Adrenal gland (tissue), 19 donors: ENCODE measurements at regions of chr19 and their contacts with region 1.

Region 1: DNA sequence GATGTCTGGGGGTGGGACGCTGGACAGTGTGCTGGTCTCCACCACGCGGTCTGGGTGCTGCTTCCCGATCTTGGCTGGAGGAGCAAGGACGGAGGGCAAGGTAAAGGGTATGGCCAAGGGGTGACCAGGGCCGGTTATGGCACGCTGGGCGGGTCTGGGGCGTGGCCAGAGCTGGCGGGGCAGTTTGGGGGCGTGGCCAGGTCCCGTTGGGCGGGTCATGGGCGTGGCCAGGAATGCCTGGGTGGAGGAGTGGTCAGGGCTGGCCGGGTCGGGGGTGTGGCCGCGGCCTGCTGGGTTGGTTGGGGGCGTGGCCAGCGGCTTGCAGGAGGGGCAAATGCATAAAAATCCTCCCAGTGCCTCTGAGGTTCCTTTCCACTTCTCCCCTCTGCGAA is 19.2 kb downstream of the GPX4 start:
- DNase-seq: peak; percentile 69 to 88 (median 79)
- H3K4me3 ChIP-seq: no peak overlapping the region
- H3K27ac ChIP-seq: peak overlapping the region in 2 of 5 donors; percentile 17 to 58
- H3K4me1 ChIP-seq: peaks cover 0 to 19% of the 10 kb centered on the region in 2 donors
- H3K27me3 ChIP-seq: no peaks in the 10 kb centered on the region
- CTCF ChIP-seq: no peak
- POLR2A ChIP-seq: no peak

Region 2: DNA sequence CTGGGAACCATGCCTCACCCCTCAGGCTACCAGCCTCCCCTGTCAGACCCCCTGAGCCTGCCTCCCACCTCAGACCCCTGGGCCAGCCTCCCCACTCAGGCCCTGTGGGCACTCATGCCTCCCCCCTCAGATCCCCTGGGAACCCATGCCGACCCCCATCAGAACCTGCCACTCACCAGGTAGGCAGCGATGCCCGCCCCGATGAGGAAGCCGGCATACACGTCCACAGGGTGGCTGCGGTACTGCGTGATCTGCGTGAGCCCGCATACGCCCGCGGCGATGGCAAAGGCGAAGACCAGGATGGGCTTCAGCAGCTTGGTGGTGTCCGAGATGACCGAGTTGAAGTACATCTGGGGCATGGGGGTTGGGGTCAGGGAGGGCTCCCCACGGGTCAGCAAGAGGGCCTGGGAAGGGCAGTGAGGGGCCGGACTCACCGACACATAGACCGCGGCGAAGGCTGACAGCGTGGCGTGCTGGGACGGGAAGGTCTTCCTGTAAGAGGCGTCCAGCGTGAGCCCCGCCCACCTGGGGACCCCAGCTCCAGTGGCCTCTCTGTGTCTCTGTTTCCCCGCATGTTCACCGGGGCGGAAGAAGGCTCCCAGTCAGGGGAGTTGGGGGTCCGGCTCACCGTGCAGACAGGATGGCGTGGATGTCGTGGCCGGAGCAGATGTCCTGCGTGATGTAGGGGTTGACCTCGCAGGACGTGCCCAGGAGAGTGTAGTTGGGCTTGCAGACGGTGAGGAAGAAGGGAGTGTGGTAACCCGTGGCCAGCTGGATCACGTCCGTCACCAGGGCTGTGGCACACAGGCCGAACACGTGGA is 308.5 kb before region 1 on chr19:
- intact Hi-C with region 1: no loop called
- DNase-seq: peak in 1 of 7 donors; percentile 35
- H3K4me3 ChIP-seq: no peak overlapping the region
- H3K27ac ChIP-seq: no peak overlapping the region
- H3K4me1 ChIP-seq: no peaks in the 10 kb centered on the region
- H3K27me3 ChIP-seq: no peaks in the 10 kb centered on the region
- CTCF ChIP-seq: no peak
- POLR2A ChIP-seq: no peak

Region 3: DNA sequence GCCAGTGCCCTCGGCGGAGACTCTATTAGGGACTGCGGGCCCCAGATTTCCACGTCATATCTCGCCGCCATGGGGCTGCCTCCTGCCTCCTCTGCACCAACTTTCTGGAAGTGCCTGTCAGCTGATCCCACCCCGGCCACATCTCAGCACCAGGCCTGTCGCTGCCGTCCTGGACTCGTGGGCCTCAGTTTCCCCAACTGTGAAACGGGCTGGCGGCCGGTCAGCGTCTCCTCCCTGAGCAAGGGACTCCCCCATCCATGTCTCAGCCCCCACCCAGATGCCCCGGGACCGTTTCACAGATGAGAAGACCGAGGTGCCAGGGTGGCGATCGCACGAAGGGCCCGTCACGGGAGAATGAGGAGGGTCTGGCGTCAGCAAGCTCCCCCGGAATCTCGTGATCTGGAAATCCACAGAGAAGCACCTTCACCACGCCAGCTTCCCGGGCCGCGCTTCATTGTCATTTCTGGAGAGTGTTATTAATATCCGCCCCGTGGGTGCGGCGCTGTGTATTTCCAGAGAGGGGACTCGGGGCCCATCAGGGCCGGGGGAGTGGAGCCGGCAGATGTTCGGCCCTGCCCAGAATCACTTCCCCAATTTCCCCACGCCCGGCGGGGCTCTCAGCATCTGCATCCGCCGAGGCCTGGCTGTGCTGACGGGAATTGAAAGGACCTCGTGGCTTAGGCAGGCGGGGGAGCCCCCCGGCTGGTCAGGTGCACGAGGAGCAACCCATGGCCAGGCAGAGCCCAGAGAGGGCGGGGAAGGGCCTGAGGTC is 175.5 kb before region 1 on chr19:
- intact Hi-C with region 1: no loop called
- DNase-seq: peak in 5 of 7 donors; percentile 52 to 76 (median 67)
- H3K4me3 ChIP-seq: no peak overlapping the region
- H3K27ac ChIP-seq: peak overlapping the region in 1 of 5 donors; percentile 12
- H3K4me1 ChIP-seq: peaks cover 0 to 7% of the 10 kb centered on the region in 2 donors
- H3K27me3 ChIP-seq: no peaks in the 10 kb centered on the region
- CTCF ChIP-seq: no peak
- POLR2A ChIP-seq: no peak

Region 4: DNA sequence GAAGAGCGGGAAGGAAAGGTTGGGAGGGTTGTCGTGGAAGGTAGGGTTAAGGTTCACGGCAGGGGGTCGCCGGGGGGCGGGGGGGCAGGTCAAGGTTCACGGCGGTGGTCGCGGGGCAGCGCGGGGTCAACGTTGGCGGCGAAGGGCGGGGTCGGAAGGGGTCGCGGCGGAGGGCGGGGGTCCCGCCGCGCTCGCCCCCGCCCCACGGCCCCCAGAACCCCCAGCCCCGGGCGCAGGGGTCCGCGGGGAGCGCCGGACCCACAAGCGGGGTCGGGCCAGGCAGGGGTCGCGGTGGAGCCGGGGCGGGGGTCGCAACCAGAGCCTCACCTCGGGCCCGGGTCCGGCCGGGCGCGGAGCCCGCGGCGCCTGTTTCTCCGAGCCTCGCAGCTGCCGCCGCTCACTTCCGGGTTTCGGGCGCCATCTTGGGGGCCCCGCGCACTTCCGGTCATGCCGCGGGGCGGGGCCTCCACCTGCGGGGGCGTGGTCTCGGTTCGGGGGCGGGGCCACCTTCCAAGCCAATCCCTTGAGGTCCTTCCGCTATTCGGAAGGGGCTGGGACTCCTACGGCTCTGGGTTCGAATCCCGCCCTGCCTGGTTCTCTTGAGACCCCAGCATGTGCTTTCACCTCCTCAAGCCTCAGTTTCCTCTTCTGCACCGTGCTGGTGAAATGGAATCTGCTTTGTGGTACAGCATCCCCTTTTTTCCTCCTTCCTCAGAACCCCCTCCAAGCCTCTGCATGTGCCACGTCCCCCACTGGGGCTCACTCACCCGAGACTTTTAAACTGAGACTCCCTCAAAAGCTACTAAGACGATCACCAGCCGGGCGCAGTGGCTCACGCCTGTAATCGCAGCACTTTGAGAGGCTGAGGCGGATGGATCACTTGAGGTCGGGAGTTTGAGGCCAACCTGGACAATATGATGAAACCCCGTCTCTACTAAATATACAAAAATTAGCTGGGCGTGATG is 51.2 kb after region 1 on chr19 and contains the start of gene SBNO2:
- intact Hi-C with region 1: loop called in 1 of 2 experiments (anchors 5 kb)
- DNase-seq: peak; percentile 88 to 96 (median 93)
- H3K4me3 ChIP-seq: peak within 1 kb of the TSS; percentile 54 to 99 (median 74)
- H3K27ac ChIP-seq: peak within 1 kb of the TSS; percentile 97 to 100 (median 99)
- H3K4me1 ChIP-seq: peaks cover 29 to 34% of the 10 kb centered on the region in 2 donors
- H3K27me3 ChIP-seq: no peaks in the 10 kb centered on the region
- CTCF ChIP-seq: no peak
- POLR2A ChIP-seq: peak; percentile 74 to 92
- total RNA-seq, gene SBNO2: 14.4 to 176 (median 65.2) TPM

Region 5: DNA sequence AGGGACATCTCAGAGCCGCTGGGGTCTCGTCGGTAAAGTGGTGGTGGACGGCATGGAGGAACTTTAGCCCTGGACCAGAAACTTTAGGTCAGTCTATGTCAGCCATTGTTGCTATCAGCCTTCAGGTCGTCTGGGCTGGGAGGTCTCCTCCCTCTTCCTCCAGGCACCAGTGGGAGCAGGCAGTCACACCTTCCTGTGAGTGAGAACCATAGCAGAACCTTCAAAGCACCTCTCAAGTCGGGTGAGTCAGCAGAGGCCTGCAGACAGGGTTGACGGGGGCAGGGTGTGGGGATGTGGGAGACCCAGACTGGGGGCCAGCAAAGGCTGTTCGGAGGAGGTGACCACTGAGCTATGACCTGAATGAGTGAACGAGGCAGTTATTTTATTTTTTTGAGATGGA is 66.5 kb after region 1 on chr19:
- intact Hi-C with region 1: loop called in 1 of 2 experiments (anchors 5 kb)
- DNase-seq: no peak
- H3K4me3 ChIP-seq: no peak overlapping the region
- H3K27ac ChIP-seq: no peak overlapping the region
- H3K4me1 ChIP-seq: no peaks in the 10 kb centered on the region
- H3K27me3 ChIP-seq: no peaks in the 10 kb centered on the region
- CTCF ChIP-seq: no peak
- POLR2A ChIP-seq: no peak

Region 6: DNA sequence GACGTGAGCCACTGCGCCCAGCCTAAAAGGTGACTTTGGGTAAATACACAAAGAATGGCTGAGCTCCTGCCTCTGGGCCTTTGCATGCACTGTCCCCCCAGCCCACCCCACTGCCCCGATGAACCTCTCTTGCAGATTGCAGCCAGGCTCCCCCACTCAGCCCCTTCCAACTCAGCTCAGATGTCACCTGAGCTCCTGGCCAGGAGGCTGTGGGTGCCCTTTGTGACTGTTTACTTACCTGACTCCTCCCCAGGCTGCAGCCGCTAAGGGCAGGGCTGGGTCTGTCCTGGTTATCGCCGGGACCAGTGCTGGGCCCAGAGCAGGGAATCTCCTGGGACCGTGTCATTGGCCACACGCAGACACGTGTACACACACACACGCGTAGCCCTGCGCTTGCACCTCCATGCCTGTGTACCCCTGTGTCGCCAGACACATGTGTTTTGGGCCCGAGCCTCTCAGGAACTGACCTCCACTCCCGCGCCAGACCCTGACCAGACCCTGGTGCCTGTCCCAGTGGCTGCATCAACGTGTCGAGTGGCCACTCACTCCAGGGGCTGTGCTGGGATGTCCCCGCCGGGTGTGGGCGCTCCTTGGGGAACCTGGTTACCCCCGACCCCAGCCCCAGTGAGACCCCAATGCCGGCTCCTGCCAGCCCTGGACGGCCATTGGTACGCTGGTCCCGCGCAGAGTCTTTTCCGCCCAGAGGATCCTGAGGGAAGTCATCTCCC is 181.4 kb after region 1 on chr19:
- intact Hi-C with region 1: no loop called
- DNase-seq: no peak
- H3K4me3 ChIP-seq: no peak overlapping the region
- H3K27ac ChIP-seq: no peak overlapping the region
- H3K4me1 ChIP-seq: no peaks in the 10 kb centered on the region
- H3K27me3 ChIP-seq: peaks cover 2% of the 10 kb centered on the region
- CTCF ChIP-seq: no peak
- POLR2A ChIP-seq: no peak